GM13977 (cell line): ENCODE measurements at regions of chr2 and their contacts with region 1.

Region 1: GRCh38 chr2:234544659-234545611 is 48.1 kb upstream of the ARL4C start:
- DNase-seq: peak; percentile 78
- CTCF ChIP-seq: peak; percentile 89

Region 2: DNA sequence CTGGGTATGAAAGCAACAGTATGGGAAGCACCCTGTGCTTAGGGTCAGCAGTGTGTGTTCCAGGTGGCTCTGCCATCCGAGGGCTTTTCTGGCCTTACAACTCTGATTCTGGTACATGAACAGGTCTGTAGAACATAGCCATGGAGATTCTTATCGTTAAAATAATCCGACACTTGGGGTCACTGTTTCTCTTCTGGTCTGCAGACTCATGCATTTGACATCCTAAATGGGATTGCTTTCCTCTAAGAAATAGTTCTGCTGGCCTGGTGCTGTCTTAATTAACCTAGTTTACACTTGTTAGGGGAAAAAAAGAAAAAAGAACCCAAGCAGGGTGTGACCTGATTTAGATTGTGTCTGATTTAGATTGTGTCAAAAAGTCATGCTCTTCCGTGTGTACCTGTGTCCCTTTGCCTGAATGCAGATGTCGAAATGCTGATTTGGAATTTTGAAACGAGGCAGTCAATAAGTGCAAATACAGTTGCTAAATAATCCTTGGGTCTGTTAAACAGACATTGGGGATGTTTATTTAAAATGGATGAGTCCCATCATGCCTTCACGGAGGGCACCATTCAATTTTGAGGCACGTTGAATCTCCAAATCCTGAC is 568.1 kb before region 1 on chr2:
- in situ Hi-C with region 1: loop called (anchors 25 kb)
- DNase-seq: peak; percentile 44
- CTCF ChIP-seq: peak; percentile 35

Region 3: DNA sequence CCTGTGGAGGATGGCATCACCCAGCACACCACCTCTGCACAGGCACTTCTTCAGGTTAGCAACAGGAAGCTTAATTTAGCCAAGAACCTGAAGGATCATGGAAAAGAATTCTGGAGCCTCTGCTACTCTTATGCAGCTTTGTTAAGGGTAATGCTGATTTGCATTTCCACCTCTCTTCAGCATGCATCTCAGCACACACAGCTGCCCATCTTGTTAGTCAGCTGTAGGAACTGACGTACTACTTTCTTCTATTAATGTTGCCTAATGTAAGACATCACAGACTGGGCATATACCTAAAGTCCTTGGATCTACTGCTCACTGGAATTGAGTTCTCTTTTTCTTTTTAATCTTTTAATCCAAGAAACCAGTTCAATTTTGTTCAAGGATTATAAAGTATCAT is 313.5 kb before region 1 on chr2:
- in situ Hi-C with region 1: no loop called
- DNase-seq: no peak
- CTCF ChIP-seq: no peak

Region 4: GRCh38 chr2:234368861-234369261 is 176.1 kb before region 1 on chr2:
- in situ Hi-C with region 1: no loop called
- DNase-seq: no peak
- CTCF ChIP-seq: no peak

Region 5: DNA sequence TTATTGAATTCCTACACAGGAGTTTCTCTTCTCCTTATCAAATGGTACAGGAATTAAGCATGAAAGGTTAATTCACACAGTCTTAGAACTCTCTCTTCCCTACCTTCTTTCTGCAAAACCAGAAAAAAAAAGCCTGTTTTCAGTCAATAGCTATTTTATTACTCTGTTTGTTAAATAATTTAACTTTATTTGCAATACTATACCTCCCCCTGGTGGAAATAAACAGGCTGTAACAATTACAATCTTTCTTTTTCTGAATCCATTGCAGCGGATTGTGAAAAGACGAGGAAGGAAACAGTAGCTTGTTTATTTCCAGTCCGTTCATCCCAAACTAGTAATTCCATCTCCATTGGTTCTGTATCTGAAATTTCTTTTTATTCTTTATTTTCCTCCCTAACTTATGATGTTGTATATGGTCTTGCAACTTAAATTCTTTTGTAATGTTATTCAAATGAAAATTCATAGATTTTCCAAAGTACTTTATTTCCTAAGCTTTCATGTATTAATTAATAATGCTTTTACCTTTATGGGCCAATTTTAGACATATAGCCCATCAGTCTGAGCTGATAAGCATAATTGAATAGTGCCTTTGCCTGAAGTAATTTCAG is 572.1 kb after region 1 on chr2:
- in situ Hi-C with region 1: loop called (anchors 10 kb)
- DNase-seq: peak; percentile 20
- CTCF ChIP-seq: peak; percentile 33